ENCODE measurements at regions of chr12 and their contacts with region 1.

Region 1: GRCh38 chr12:45468748-45469615 is 253.1 kb downstream of the ANO6 start:
- DNase-seq: no peak
- ATAC-seq: no peak
- H3K4me3 ChIP-seq: no peak overlapping the region
- H3K4me3 Mint-ChIP-seq: peak overlapping the region in 1 of 3 donors; percentile 45
- H3K27ac ChIP-seq: no peak overlapping the region
- H3K27ac Mint-ChIP-seq: no peak overlapping the region
- H3K4me1 ChIP-seq: peaks cover 14 to 16% of the 10 kb centered on the region in 2 experiments
- H3K4me1 Mint-ChIP-seq: peaks cover 13 to 25% (median 16%) of the 10 kb centered on the region in 3 donors
- H3K27me3 ChIP-seq: peaks cover 0 to 8% of the 10 kb centered on the region in 2 experiments
- H3K27me3 Mint-ChIP-seq: peaks cover 3 to 7% of the 10 kb centered on the region in 2 donors

Region 2: DNA sequence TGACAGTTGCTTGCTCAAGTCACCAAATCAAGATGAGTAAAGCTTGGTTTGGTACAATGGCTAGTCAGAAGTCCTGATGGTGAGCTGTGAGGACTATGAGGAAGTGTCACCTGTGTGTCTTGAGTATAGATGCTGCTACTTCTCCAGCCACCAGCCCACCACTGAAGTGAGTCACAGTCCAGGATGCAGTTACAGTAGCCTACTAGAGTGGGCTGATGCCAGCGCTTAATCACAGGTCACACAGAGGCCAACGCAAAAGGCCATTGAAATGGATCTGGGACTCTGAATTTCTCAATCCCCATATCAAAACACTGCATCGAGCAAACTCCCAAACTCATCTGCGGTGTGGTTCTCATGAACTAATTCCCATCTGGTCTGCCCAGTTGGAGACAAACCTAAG is 29.9 kb before region 1 on chr12:
- CTCF ChIA-PET with region 1: no interaction called
- POLR2A ChIA-PET with region 1: interaction called in 1 of 2 experiments, 11 read pairs
- DNase-seq: no peak
- ATAC-seq: no peak
- H3K4me3 ChIP-seq: no peak overlapping the region
- H3K4me3 Mint-ChIP-seq: no peak overlapping the region
- H3K27ac ChIP-seq: no peak overlapping the region
- H3K27ac Mint-ChIP-seq: no peak overlapping the region
- H3K4me1 ChIP-seq: no peaks in the 10 kb centered on the region
- H3K4me1 Mint-ChIP-seq: no peaks in the 10 kb centered on the region
- H3K27me3 ChIP-seq: peaks cover 0 to 3% of the 10 kb centered on the region in 2 experiments
- H3K27me3 Mint-ChIP-seq: no peaks in the 10 kb centered on the region

Measured in T-cell (primary cell).